ENCODE measurements at regions of chr14 and their contacts with region 1.

Region 1: DNA sequence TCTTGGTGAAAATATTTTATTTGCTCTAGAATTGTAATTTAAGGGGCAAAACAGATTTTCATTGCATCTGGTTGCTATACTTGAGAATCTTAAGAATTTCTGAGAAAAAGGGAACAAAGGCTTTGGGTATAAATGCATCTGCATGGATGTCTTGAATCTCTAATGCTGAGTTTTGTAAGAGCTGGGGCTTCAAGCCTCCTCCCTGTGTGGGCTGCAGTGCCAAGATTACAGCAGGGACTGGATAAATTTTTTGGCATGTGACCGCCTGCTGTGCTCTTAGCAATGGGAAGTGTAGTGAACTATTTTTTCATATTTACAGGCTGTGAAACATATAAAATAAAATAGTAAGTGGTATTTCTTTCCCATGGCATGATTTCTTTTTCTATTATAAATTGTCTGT is 70.0 kb downstream of the SLC38A6 start:
- DNase-seq: no peak
- H3K4me3 ChIP-seq: no peak overlapping the region
- H3K27ac ChIP-seq: no peak overlapping the region
- H3K4me1 ChIP-seq: no peaks in the 10 kb centered on the region
- H3K27me3 ChIP-seq: no peaks in the 10 kb centered on the region
- CTCF ChIP-seq: no peak
- POLR2A ChIP-seq: no peak

Region 2: DNA sequence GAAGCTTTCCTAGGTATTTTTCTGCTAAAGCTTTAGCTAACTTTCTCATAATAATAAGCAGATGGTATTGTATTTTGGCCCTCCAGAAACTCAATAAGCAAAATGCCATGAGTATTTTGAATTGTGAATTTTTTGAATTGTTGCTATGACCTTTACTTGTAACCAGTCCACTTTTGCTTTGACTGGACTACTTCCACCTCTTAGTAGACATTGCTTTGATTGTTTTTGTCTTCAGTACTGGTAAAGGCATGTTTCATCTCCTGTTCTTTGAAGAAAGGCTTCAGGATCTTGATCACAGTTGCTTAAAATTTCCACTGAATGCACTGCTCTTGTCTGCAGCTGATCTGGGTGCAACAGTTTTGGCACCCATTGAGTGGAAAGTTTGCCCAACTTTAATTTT is 172.5 kb before region 1 on chr14:
- CTCF ChIA-PET with region 1: no interaction called
- POLR2A ChIA-PET with region 1: no interaction called
- dilution Hi-C with region 1: no loop called
- intact Hi-C with region 1: no loop called
- DNase-seq: no peak
- H3K4me3 ChIP-seq: no peak overlapping the region
- H3K27ac ChIP-seq: no peak overlapping the region
- H3K4me1 ChIP-seq: no peaks in the 10 kb centered on the region
- H3K27me3 ChIP-seq: no peaks in the 10 kb centered on the region
- CTCF ChIP-seq: no peak
- POLR2A ChIP-seq: no peak

Region 3: GRCh38 chr14:60989599-60989998 is 61.5 kb before region 1 on chr14:
- CTCF ChIA-PET with region 1: no interaction called
- POLR2A ChIA-PET with region 1: interaction called, 10 read pairs
- dilution Hi-C with region 1: no loop called
- intact Hi-C with region 1: no loop called
- DNase-seq: no peak
- H3K4me3 ChIP-seq: no peak overlapping the region
- H3K27ac ChIP-seq: no peak overlapping the region
- H3K4me1 ChIP-seq: no peaks in the 10 kb centered on the region
- H3K27me3 ChIP-seq: no peaks in the 10 kb centered on the region
- CTCF ChIP-seq: no peak
- POLR2A ChIP-seq: no peak

Region 4: GRCh38 chr14:61121355-61121787 is 70.3 kb after region 1 on chr14:
- CTCF ChIA-PET with region 1: no interaction called
- POLR2A ChIA-PET with region 1: no interaction called
- dilution Hi-C with region 1: no loop called
- intact Hi-C with region 1: no loop called
- DNase-seq: no peak
- H3K4me3 ChIP-seq: no peak overlapping the region
- H3K27ac ChIP-seq: no peak overlapping the region
- H3K4me1 ChIP-seq: peaks cover 12% of the 10 kb centered on the region
- H3K27me3 ChIP-seq: no peaks in the 10 kb centered on the region
- CTCF ChIP-seq: no peak
- POLR2A ChIP-seq: no peak

Measured in endothelial cell of umbilical vein (primary cell).